Adrenal gland (tissue), 19 donors: ENCODE measurements at regions of chr3 and their contacts with region 1.

Region 1: DNA sequence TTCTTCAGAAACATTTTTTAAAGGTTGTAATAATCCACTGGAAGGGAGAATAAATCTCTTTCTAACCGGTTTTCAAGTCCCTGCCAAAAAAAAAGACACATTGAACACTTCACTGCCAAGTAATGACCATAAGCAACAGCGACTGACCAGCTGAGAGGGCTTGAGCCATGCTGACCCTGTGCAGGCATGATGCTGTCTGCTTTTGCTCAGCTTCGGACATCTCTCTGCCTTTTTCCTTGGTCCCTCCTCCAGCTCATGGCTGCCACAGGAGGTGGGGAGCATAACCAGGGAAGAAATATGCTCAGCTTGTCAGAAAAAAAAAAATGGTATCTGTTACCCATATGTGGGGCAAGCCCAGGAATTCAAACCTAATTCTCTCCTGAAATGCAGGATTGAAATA is 1.5 kb downstream of the IGSF10 start:
- DNase-seq: no peak
- H3K4me3 ChIP-seq: peak overlapping the region in 1 of 4 donors; percentile 63
- H3K27ac ChIP-seq: no peak overlapping the region
- H3K4me1 ChIP-seq: peaks cover 0 to 13% of the 10 kb centered on the region in 2 donors
- H3K27me3 ChIP-seq: no peaks in the 10 kb centered on the region
- CTCF ChIP-seq: no peak
- POLR2A ChIP-seq: no peak

Region 2: GRCh38 chr3:151611419-151611818 is 152.1 kb after region 1 on chr3:
- intact Hi-C with region 1: no loop called
- DNase-seq: no peak
- H3K4me3 ChIP-seq: no peak overlapping the region
- H3K27ac ChIP-seq: no peak overlapping the region
- H3K4me1 ChIP-seq: peaks cover 0 to 4% of the 10 kb centered on the region in 2 donors
- H3K27me3 ChIP-seq: no peaks in the 10 kb centered on the region
- CTCF ChIP-seq: no peak
- POLR2A ChIP-seq: no peak

Region 3: DNA sequence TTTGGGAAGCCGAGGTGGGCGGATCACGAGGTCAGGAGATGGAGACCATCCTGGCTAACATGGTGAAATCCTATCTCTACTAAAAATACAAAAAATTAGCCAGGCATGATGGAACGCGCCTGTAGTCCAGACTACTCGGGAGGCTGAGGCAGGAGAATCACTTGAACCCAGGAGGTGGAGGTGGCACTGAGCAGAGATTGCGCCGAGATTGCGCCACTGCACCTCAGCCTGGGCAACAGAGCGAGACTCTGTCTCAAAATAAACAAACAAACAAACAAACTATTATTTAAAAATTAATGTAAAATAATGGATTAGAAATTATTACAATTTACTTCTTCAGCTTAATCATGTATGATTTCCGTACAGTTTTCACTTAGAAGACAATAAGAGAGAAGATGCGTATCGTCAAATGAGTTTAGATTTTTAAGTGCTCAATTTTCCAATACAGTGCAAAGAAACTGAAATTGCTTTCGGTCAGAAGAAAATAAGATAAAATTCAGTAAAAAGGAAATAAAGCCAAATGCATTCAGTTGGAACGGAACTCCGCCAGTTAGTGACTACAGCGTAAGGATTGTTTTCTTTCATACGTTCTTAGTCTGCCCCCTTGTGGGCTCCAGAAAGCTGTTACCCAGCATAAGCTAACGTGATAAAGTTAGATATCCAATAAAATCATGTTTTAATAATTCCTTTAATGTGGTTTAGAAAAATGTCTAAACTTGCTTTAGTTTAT is 379.4 kb after region 1 on chr3:
- intact Hi-C with region 1: loop called in 1 of 2 experiments (anchors 10 kb)
- DNase-seq: peak; percentile 57 to 80 (median 70)
- H3K4me3 ChIP-seq: peak overlapping the region in 1 of 4 donors; percentile 46
- H3K27ac ChIP-seq: no peak overlapping the region
- H3K4me1 ChIP-seq: peaks cover 9 to 18% of the 10 kb centered on the region in 2 donors
- H3K27me3 ChIP-seq: no peaks in the 10 kb centered on the region
- CTCF ChIP-seq: peak; percentile 58 to 91 (median 88)
- POLR2A ChIP-seq: no peak